Posterior cingulate gyrus (tissue), 11 donors: ENCODE measurements at regions of chr12 and their contacts with region 1.

Region 1: DNA sequence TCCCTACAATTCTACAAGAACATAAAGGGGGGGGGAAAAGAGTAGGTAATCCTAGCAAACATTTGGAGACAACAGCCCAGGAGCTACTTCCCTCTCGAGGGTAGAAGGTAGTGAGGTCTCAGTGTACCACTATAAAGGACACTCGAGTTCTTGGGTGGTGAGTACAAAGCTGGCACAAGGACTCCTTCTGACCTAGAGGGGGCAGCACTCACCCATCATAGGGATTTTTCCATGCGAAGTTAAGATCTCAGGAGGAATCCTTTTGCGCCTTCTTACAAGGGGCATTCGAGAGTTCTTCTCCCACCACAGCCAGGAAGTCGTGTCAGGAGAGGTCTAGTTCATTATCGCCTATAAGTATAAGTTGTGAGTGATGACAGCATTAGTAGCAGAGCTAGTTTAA is 200.2 kb upstream of the RBM19 start:
- DNase-seq: peak in 7 of 10 donors; percentile 11 to 87 (median 62)

Region 2: GRCh38 chr12:114213055-114213581 is 46.8 kb after region 1 on chr12:
- intact Hi-C with region 1: loop called (anchors 2 kb)
- DNase-seq: peak in 5 of 10 donors; percentile 13 to 84 (median 23)

Region 3: GRCh38 chr12:114476159-114476558 is 309.8 kb after region 1 on chr12:
- intact Hi-C with region 1: loop called (anchors 2 kb)
- DNase-seq: no peak

Region 4: GRCh38 chr12:114508529-114509129 is 342.3 kb after region 1 on chr12:
- intact Hi-C with region 1: loop called (anchors 1 kb)
- DNase-seq: peak in 8 of 10 donors; percentile 26 to 91 (median 72)